Heart right ventricle (tissue), 16 donors: ENCODE measurements at regions of chr10 and their contacts with region 1.

Region 1: DNA sequence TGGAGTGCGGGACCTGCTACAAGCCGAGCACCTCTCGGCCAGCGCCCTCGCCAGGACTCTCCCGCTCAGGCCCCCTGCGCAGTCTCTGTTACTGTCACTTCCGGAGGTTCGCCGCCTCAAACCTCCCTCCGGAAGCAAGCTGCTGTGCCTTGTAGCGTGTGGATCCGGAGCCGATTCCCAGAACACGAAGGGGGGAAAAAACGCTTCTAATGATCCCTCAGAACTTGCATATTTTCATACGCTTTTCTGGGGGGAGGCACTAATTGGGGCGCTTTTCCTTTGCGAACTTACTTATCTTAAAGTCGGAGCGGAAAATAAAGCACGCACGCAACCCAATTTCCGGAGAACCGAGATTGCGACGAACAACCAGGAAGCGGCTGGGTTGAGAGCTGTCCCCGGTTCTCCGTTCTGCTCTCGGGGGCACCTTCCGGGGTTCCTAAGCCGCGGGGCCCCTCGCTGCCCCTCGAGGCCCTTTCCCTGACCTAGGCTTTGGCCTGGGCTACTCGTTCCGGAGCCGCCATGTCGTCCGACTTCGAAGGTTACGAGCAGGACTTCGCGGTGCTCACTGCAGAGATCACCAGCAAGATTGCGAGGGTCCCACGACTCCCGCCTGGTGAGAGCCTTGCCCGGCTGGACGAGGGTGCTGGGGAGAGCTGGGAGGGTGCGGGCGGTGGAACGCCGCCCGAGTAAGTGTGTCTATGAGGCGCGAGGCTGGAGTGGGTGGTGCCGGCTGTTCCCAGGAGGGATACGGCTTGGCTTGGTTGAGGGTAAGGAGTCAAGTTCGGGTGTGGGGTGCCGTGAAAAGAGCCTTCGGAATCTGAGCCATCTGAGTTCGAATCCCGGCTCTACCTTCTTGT is at the starts of genes VTI1A and ZDHHC6:
- DNase-seq: peak; percentile 85
- ATAC-seq: peak; percentile 96 to 100 (median 98)
- H3K4me3 ChIP-seq: peak within 1 kb of the TSS; percentile 60 to 98 (median 78)
- H3K27ac ChIP-seq: peak within 1 kb of the TSS; percentile 85 to 95 (median 90)
- H3K4me1 ChIP-seq: peaks cover 5 to 38% (median 27%) of the 10 kb centered on the region in 9 donors
- H3K27me3 ChIP-seq: no peaks in the 10 kb centered on the region
- CTCF ChIP-seq: peak in 3 of 9 donors; percentile 43 to 49 (median 43)
- total RNA-seq, gene VTI1A: 15.7 to 24.5 (median 21.1) TPM
- total RNA-seq, gene ZDHHC6: 11.0 to 19.3 (median 15.2) TPM

Region 2: GRCh38 chr10:112115799-112116385 is 331.2 kb before region 1 on chr10:
- intact Hi-C with region 1: no loop called
- DNase-seq: no peak
- ATAC-seq: peak in 2 of 8 donors; percentile 46 to 65
- H3K4me3 ChIP-seq: no peak overlapping the region
- H3K27ac ChIP-seq: no peak overlapping the region
- H3K4me1 ChIP-seq: no peaks in the 10 kb centered on the region
- H3K27me3 ChIP-seq: peaks cover 0 to under 1% (median 0%) of the 10 kb centered on the region in 7 donors
- CTCF ChIP-seq: peak; percentile 9 to 74 (median 67)

Region 3: GRCh38 chr10:112131346-112131745 is 315.7 kb before region 1 on chr10:
- intact Hi-C with region 1: no loop called
- DNase-seq: no peak
- ATAC-seq: no peak
- H3K4me3 ChIP-seq: no peak overlapping the region
- H3K27ac ChIP-seq: no peak overlapping the region
- H3K4me1 ChIP-seq: peaks cover 0 to 3% (median 0%) of the 10 kb centered on the region in 9 donors
- H3K27me3 ChIP-seq: peaks cover 0 to 7% (median 0%) of the 10 kb centered on the region in 7 donors
- CTCF ChIP-seq: no peak

Region 4: GRCh38 chr10:112369495-112370423 is 77.3 kb before region 1 on chr10:
- intact Hi-C with region 1: loop called in 1 of 10 experiments (anchors 5 kb)
- DNase-seq: no peak
- ATAC-seq: no peak
- H3K4me3 ChIP-seq: no peak overlapping the region
- H3K27ac ChIP-seq: peak overlapping the region in 1 of 10 donors; percentile 31
- H3K4me1 ChIP-seq: peaks cover 0 to 13% (median 3%) of the 10 kb centered on the region in 9 donors
- H3K27me3 ChIP-seq: no peaks in the 10 kb centered on the region
- CTCF ChIP-seq: no peak

Region 5: GRCh38 chr10:112461029-112461887 is 14.2 kb after region 1 on chr10:
- intact Hi-C with region 1: no loop called
- DNase-seq: no peak
- ATAC-seq: no peak
- H3K4me3 ChIP-seq: no peak overlapping the region
- H3K27ac ChIP-seq: no peak overlapping the region
- H3K4me1 ChIP-seq: peaks cover 0 to 4% (median 0%) of the 10 kb centered on the region in 9 donors
- H3K27me3 ChIP-seq: no peaks in the 10 kb centered on the region
- CTCF ChIP-seq: no peak